GM10248 (cell line): ENCODE measurements at regions of chr21 and their contacts with region 1.

Region 1: GRCh38 chr21:37563641-37564340 is 197.2 kb downstream of the DYRK1A start:
- DNase-seq: peak; percentile 95
- CTCF ChIP-seq: peak; percentile 32

Region 2: GRCh38 chr21:37538971-37539590 is 24.7 kb before region 1 on chr21:
- CTCF ChIA-PET with region 1: no interaction called
- POLR2A ChIA-PET with region 1: no interaction called
- DNase-seq: no peak
- CTCF ChIP-seq: no peak

Region 3: DNA sequence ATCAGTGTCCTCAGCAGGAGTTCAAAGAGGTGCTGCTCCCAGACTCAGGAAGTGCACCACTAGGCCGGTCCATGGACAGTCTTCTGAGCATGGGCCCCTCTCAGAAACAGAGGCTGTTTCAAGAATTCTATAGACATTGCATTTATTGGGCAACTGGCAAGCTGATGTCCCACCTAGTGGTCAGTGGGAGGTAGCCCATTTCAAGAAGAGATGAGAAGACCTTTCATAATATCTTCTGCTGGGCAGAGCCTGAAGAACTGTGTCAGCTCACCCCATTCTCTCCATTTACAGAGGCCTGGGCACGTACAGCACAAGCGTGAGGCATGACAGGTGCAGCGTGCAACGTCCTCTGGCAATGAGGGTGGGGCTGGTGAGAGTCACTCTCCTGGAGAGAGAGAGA is 18.8 kb after region 1 on chr21:
- CTCF ChIA-PET with region 1: interaction called, 15 read pairs
- POLR2A ChIA-PET with region 1: no interaction called
- DNase-seq: peak; percentile 55
- CTCF ChIP-seq: peak; percentile 65